Mammary epithelial cell (primary cell): ENCODE measurements at regions of chr5 and their contacts with region 1.

Region 1: DNA sequence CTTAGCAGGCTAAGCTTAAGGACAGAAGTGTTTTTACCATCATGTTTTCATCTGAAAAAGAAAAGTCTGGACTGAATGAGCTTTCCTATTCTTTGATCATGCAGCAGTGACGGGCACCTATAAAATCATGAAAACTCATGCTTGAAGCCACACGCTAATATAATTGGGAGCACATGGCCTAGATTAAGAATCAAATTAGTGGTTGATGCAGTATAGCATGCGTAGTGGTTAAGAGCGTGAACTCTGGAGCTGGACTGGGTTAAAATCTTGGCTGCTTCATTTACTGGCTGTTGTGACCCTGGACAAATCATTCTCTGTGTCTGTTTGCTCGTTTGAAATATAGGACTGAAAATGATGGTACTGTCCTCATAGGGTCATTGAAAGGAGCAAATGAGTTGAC is 49.9 kb upstream of the IL13 start:
- DNase-seq: no peak
- H3K4me3 ChIP-seq: no peak overlapping the region
- H3K27ac ChIP-seq: no peak overlapping the region
- H3K4me1 ChIP-seq: no peaks in the 10 kb centered on the region
- H3K27me3 ChIP-seq: no peaks in the 10 kb centered on the region
- CTCF ChIP-seq: no peak

Region 2: GRCh38 chr5:132704875-132705274 is 96.8 kb after region 1 on chr5:
- CTCF ChIA-PET with region 1: interaction called, 12 read pairs
- dilution Hi-C with region 1: no loop called
- in situ Hi-C with region 1: no loop called
- intact Hi-C with region 1: no loop called
- DNase-seq: peak; percentile 11
- H3K4me3 ChIP-seq: no peak overlapping the region
- H3K27ac ChIP-seq: no peak overlapping the region
- H3K4me1 ChIP-seq: no peaks in the 10 kb centered on the region
- H3K27me3 ChIP-seq: no peaks in the 10 kb centered on the region
- CTCF ChIP-seq: no peak